Gastrocnemius medialis (tissue), 4 donors: ENCODE measurements at regions of chr20 and their contacts with region 1.

Region 1: DNA sequence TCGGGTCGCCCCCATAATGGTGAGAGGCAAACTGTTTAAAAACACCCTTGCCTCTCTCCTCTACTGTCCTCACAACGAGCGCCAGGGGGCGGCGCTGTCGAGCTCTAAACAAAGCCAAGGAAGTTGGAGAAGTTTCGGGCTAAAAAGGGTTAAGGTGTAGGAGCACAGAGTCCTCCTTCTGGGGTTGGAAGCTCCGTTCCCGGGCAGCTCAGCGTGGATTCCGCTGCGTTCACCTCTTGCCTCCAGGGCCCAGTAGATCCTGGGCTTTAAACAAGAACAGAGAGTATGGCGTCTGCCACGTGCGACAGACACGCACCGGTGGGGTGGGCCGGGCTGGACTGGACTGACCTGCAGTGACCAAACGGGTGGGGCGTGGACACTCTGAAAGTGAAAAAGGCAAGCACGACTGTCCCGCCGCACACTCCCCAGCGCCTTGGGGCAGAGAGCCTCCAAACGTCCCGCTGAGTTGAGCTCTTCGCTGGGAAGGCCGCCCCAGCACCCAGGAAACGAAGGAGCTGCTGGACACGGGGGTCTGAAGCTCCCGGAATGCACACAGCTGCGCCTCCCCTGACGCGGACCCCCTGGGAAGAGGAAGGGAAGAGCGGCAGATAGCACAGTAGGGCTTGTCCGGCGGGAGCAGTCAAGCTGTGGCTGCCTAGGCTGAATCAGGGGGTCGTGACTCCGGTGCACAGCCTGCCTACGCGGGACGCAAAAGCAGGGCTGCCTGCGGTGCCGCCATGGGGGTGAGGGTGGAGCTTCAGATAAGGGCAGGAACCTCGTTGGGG is 1.6 kb upstream of the THBD start:
- DNase-seq: peak; percentile 55 to 84
- ATAC-seq: peak; percentile 20 to 37
- H3K4me3 ChIP-seq: peak overlapping the region; percentile 63 to 84 (median 72)
- H3K27ac ChIP-seq: peak overlapping the region; percentile 93 to 95 (median 94)
- H3K4me1 ChIP-seq: peaks cover 19 to 32% of the 10 kb centered on the region in 2 donors
- H3K27me3 ChIP-seq: no peaks in the 10 kb centered on the region
- CTCF ChIP-seq: peak; percentile 71 to 87 (median 75)
- POLR2A ChIP-seq: peak; percentile 27 to 51

Region 2: GRCh38 chr20:22716821-22717351 is 334.2 kb before region 1 on chr20:
- in situ Hi-C with region 1: loop called in 1 of 4 experiments (anchors 25 kb)
- intact Hi-C with region 1: no loop called
- DNase-seq: no peak
- ATAC-seq: no peak
- H3K4me3 ChIP-seq: no peak overlapping the region
- H3K27ac ChIP-seq: no peak overlapping the region
- H3K4me1 ChIP-seq: no peaks in the 10 kb centered on the region
- H3K27me3 ChIP-seq: no peaks in the 10 kb centered on the region
- CTCF ChIP-seq: no peak
- POLR2A ChIP-seq: no peak

Region 3: DNA sequence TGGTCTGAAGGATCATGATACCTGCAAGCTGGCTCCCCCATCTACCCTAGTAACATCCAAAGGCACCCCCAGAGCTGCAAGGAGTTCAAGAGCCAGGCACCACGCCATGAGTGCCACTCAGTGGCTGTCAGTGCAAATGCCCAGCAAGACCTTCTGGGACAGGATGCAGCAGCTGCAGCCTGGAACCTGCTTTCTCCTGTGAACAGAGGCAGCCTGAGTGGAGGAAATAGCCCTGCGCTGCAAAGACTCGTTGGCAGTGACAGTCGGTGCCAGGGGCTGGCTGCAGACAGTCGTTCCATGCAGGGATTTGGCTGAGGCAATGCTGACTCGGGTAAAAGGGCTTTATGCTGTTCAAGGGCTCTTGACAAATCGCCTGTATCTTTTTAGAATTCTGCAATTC is 31.6 kb before region 1 on chr20:
- in situ Hi-C with region 1: no loop called
- intact Hi-C with region 1: no loop called
- DNase-seq: peak in 1 of 2 donors; percentile 23
- ATAC-seq: peak; percentile 30 to 44
- H3K4me3 ChIP-seq: no peak overlapping the region
- H3K27ac ChIP-seq: no peak overlapping the region
- H3K4me1 ChIP-seq: peaks cover 0 to 4% of the 10 kb centered on the region in 2 donors
- H3K27me3 ChIP-seq: no peaks in the 10 kb centered on the region
- CTCF ChIP-seq: no peak
- POLR2A ChIP-seq: no peak

Region 4: GRCh38 chr20:23125625-23126191 is 74.7 kb after region 1 on chr20:
- in situ Hi-C with region 1: no loop called
- intact Hi-C with region 1: loop called (anchors 1 kb)
- DNase-seq: peak; percentile 61 to 80
- ATAC-seq: peak; percentile 71
- H3K4me3 ChIP-seq: no peak overlapping the region
- H3K27ac ChIP-seq: peak overlapping the region; percentile 83 to 88 (median 86)
- H3K4me1 ChIP-seq: peaks cover 19 to 31% of the 10 kb centered on the region in 2 donors
- H3K27me3 ChIP-seq: no peaks in the 10 kb centered on the region
- CTCF ChIP-seq: no peak
- POLR2A ChIP-seq: peak in 1 of 2 donors; percentile 14

Region 5: DNA sequence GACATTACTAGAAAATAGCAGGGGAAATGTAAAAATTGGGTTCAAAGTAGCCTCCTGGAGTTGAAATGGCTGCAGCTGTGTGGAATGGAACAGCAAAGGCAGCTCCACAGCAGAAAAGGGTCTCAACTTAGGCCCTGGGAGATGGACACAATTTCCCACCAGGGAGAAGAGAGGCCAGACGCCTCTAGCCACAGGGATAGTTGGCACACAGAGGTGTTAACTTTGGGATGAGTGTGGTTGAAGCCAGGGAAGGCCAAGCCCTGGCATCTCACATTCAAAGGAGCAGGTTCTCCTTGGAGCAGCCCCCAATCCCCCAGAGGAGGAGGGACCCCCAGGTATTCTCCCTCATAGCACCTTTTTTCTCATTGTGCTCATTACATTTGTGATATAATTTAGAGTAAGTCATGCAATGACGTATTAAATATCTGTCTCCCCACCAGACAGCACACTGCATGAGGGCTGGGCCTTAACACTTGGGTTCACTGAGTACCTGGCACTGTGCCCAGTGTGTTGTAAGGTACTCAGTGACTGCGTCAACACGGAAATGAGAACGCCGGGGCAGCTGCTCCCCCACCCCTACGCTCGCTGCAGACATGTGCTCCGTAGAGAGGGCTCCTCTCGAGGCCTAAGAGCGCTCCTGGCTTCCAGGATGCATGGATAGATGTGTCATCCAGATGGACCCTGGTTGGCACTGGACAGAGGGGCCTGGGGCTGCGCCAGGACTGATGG is 111.1 kb after region 1 on chr20:
- in situ Hi-C with region 1: no loop called
- intact Hi-C with region 1: loop called (anchors 5 kb)
- DNase-seq: peak; percentile 92 to 97
- ATAC-seq: peak; percentile 90 to 94
- H3K4me3 ChIP-seq: no peak overlapping the region
- H3K27ac ChIP-seq: peak overlapping the region; percentile 77 to 83 (median 78)
- H3K4me1 ChIP-seq: peaks cover 44 to 56% of the 10 kb centered on the region in 2 donors
- H3K27me3 ChIP-seq: no peaks in the 10 kb centered on the region
- CTCF ChIP-seq: no peak
- POLR2A ChIP-seq: peak in 1 of 2 donors; percentile 21

Region 6: GRCh38 chr20:23235173-23236027 is 184.4 kb after region 1 on chr20:
- in situ Hi-C with region 1: no loop called
- intact Hi-C with region 1: loop called (anchors 5 kb)
- DNase-seq: peak; percentile 26 to 52
- ATAC-seq: peak; percentile 69 to 93
- H3K4me3 ChIP-seq: no peak overlapping the region
- H3K27ac ChIP-seq: no peak overlapping the region
- H3K4me1 ChIP-seq: no peaks in the 10 kb centered on the region
- H3K27me3 ChIP-seq: no peaks in the 10 kb centered on the region
- CTCF ChIP-seq: peak; percentile 64 to 82 (median 76)
- POLR2A ChIP-seq: no peak

Region 7: DNA sequence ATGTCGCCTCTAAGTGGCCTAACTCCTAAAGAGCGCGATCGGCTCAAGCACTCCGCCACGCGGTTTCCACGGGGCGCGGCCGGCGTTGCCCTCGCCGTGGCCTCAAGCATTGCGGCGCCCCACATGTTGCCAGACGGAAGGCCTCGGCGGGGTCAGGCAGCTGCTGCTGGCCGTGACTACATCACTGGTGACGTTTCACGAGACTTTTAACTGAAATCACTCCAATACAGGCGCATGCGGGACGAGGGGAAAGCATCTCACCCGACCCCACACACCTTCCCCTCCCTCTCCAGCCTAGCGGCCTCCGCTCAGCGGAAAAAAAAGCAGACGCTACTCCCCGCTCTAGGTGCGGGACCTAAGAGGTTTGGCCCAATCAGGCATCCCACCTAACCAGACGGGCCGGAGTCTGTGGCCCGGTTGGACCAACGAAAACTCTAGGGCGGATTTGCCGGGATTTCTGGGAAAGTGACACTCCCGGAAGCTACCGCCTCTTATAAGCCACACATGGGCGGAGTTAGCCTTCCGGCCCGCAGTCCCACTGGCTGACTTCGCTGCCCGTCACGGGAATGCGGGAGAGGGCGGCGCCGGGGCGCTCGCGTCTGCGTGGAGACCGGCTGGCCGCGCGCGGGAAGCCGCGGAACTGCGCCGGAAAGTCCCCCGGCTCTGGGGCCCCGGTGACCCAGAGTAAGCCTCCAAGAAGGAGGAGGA is 299.3 kb after region 1 on chr20 and contains the start of gene NXT1:
- in situ Hi-C with region 1: loop called in 3 of 4 experiments (anchors 10 to 25 kb)
- intact Hi-C with region 1: loop called (anchors 2 kb)
- DNase-seq: peak; percentile 98
- ATAC-seq: peak; percentile 93 to 94
- H3K4me3 ChIP-seq: peak within 1 kb of the TSS; percentile 81 to 96 (median 88)
- H3K27ac ChIP-seq: peak within 1 kb of the TSS; percentile 88 to 99 (median 96)
- H3K4me1 ChIP-seq: peaks cover 16 to 23% of the 10 kb centered on the region in 2 donors
- H3K27me3 ChIP-seq: no peaks in the 10 kb centered on the region
- CTCF ChIP-seq: no peak
- POLR2A ChIP-seq: peak; percentile 94 to 96
- total RNA-seq, gene NXT1: 15.2 to 17.9 (median 15.9) TPM

Region 8: DNA sequence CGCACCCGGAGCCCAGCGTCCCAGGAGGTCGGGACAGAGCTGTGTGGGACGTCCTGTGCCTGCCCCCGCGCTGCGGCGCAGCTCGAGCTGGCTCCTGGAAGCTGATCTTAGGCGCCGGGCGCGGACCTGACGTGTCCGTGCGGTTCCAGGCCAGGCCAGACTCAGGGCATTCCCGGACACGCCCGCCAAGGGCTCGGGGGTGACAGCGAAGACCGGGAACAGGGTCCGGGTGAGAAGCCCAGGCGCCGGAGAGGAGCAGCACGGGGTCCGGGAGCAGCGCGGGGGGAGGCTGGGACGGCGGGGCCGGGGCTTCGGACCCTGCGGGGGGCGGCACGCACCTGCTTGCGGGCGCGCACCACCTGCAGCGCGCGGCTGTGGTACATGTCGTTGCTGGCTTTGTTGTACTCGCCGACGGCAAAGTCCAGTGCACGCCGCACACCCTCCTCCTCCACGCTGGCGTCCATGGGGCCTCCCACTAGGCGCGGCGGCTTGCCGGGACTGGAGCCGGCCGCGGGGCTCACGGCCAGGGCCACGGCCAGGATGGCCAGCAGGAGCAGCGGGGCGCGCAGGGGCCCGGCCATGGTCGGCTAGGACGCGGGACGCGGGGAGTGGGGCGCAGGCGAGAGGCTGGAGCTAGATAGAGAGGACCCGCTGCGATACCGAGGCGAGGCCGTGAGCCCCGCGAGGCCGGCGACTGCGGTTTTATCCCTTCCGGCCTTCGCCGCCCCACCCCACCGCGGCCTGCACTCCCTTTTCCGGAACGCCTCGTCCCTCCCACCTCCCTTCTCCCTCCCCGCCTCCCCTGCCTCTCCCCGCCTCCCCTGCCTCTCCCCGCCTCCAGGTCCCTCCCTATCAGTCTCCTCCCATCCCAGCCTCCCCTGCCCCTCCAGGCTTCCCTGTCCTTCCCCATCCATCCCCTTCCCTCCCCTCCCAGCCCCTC is 586.5 kb after region 1 on chr20 and contains the start of gene CST3:
- in situ Hi-C with region 1: no loop called
- intact Hi-C with region 1: loop called (anchors 2 kb)
- DNase-seq: peak; percentile 94 to 97
- ATAC-seq: peak; percentile 31 to 32
- H3K4me3 ChIP-seq: peak within 1 kb of the TSS; percentile 70 to 98 (median 83)
- H3K27ac ChIP-seq: peak within 1 kb of the TSS; percentile 96 to 100 (median 96)
- H3K4me1 ChIP-seq: peaks cover 58 to 67% of the 10 kb centered on the region in 2 donors
- H3K27me3 ChIP-seq: no peaks in the 10 kb centered on the region
- CTCF ChIP-seq: peak in 1 of 5 experiments; percentile 18
- POLR2A ChIP-seq: peak; percentile 96
- total RNA-seq, gene CST3: 461 to 1,821 (median 697) TPM